CD14-positive monocyte (primary cell): ENCODE measurements at regions of chr19 and their contacts with region 1.

Region 1: GRCh38 chr19:46860125-46860845 is 512 bp upstream of the ARHGAP35 start:
- DNase-seq: peak; percentile 94 to 96 (median 95)
- H3K4me3 ChIP-seq: peak overlapping the region; percentile 64 to 90 (median 83)
- H3K4me3 Mint-ChIP-seq: peak overlapping the region; percentile 87 to 89
- H3K27ac ChIP-seq: peak overlapping the region; percentile 82 to 84
- H3K27ac Mint-ChIP-seq: peak overlapping the region; percentile 82 to 95 (median 92)
- H3K4me1 ChIP-seq: peaks cover 47 to 60% of the 10 kb centered on the region in 2 donors
- H3K4me1 Mint-ChIP-seq: peaks cover 27% of the 10 kb centered on the region
- H3K27me3 ChIP-seq: no peaks in the 10 kb centered on the region
- H3K27me3 Mint-ChIP-seq: peaks cover 0 to 3% (median 0%) of the 10 kb centered on the region in 3 donors
- CTCF ChIP-seq: no peak

Region 2: GRCh38 chr19:46849610-46850009 is 10.7 kb before region 1 on chr19:
- intact Hi-C with region 1: no loop called
- DNase-seq: no peak
- H3K4me3 ChIP-seq: peak overlapping the region; percentile 75 to 92 (median 79)
- H3K4me3 Mint-ChIP-seq: peak overlapping the region; percentile 95 to 100
- H3K27ac ChIP-seq: peak overlapping the region; percentile 60 to 78
- H3K27ac Mint-ChIP-seq: peak overlapping the region; percentile 88 to 96 (median 93)
- H3K4me1 ChIP-seq: peaks cover 32 to 40% of the 10 kb centered on the region in 2 donors
- H3K4me1 Mint-ChIP-seq: peaks cover 37% of the 10 kb centered on the region
- H3K27me3 ChIP-seq: no peaks in the 10 kb centered on the region
- H3K27me3 Mint-ChIP-seq: peaks cover 3 to 4% (median 3%) of the 10 kb centered on the region in 3 donors
- CTCF ChIP-seq: no peak

Region 3: DNA sequence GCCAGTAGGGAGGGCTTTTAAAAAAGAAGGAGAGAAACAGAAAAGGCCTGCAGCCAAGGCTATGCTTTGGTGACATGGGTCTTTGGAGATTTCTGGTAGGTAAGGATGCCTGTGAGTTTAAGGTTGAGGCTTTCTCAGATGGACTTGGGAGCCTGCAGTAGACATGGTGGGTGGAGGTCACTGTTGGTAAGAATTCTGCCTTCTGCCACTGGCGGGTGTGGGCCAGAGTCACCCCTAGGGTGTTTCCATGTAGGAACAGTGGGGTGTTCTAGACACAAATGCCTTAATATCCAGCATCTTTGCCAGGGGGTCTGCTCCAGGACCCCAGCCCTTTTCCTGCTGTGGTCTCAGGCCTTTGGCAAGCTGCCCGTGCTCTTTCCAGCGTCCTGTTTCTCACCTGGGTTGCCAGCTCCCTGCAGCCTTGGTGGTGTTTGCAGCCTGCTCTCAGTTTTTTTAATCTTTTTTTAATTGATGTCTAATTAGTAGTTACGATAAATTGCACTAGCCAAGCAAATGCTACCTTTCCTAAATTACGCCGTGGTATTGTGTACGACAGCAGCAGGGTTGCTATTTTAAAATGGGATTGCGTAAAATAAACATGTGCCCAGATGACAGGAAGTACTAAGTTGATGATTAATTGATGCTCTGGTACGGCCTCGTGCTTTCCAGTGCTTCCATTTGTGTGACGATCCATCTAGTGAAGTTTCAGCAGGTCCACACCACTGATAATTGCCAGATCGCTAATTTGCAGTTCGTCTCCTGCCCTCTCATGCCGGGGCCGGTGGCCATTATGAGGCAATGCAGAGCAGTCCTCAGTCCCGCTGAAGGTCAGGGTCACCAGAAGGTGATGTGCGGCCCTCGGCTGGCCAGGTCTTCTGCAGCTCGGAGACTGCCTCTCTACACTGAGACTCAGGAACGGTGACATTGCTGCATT is 124.1 kb after region 1 on chr19:
- intact Hi-C with region 1: loop called in 1 of 2 experiments (anchors 10 kb)
- DNase-seq: peak; percentile 62 to 82 (median 67)
- H3K4me3 ChIP-seq: no peak overlapping the region
- H3K4me3 Mint-ChIP-seq: peak overlapping the region in 1 of 2 donors; percentile 42
- H3K27ac ChIP-seq: no peak overlapping the region
- H3K27ac Mint-ChIP-seq: peak overlapping the region in 6 of 7 donors; percentile 50 to 75 (median 67)
- H3K4me1 ChIP-seq: peaks cover 34 to 42% of the 10 kb centered on the region in 2 donors
- H3K4me1 Mint-ChIP-seq: peaks cover 39% of the 10 kb centered on the region
- H3K27me3 ChIP-seq: no peaks in the 10 kb centered on the region
- H3K27me3 Mint-ChIP-seq: peaks cover 0 to 4% (median 0%) of the 10 kb centered on the region in 3 donors
- CTCF ChIP-seq: no peak